ENCODE measurements at regions of chr17 and their contacts with region 1.

Region 1: GRCh38 chr17:20009302-20010098 is at the start of gene SPECC1:
- DNase-seq: peak; percentile 74 to 87
- ATAC-seq: peak; percentile 45 to 99 (median 96)
- H3K4me3 ChIP-seq: peak within 1 kb of the TSS; percentile 75 to 89 (median 79)
- H3K27ac ChIP-seq: peak within 1 kb of the TSS; percentile 77 to 91 (median 86)
- H3K4me1 ChIP-seq: peaks cover 0 to 26% (median 12%) of the 10 kb centered on the region in 9 donors
- H3K27me3 ChIP-seq: peaks cover 0 to 59% (median 5%) of the 10 kb centered on the region in 7 donors
- CTCF ChIP-seq: peak; percentile 38 to 100 (median 98)
- total RNA-seq, gene SPECC1: 6.8 to 15.2 (median 9.7) TPM

Region 2: DNA sequence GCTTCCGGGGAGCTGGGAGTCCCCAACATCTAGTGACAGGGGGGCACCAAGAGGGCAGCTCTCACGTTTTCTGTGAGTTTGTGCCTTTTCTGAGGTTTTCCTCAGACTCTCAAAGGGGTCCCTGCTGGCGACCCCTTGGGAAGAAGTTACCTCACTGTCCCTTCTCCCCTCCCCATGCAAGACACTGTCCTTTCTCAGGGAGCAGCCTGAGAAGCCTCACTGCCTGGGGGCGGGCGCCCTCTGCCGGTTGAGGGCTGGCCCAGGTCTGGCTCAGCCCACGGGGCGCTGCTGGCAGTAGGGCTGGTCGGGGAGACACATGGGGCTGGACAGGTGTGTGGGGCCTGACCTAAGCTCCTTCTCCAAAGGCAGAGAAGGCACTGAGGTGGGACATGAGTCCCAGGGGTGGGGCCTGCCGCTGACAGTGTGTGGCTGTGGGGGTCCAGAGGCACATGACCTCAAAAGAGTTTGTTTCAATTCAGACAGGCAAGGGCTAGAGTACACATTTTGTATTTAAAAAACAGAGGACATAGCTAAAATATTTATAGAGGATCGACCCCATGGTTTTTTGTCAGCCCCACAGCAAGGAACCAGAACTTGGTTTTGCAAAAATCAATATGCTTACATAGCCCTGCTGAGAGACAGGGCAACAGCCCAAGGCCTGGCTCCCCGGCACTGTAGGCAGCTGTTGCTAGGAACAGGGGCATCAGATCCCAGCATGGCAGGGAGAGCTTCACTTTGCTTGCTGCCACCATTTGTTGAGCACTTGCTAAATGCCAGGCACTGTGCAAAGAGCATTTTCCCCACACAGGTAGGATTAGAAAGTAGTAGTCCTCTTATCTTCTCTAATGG is 242.9 kb before region 1 on chr17:
- intact Hi-C with region 1: no loop called
- DNase-seq: peak; percentile 77 to 84
- ATAC-seq: peak; percentile 89 to 95 (median 90)
- H3K4me3 ChIP-seq: no peak overlapping the region
- H3K27ac ChIP-seq: peak overlapping the region in 1 of 10 donors; percentile 3
- H3K4me1 ChIP-seq: peaks cover 0 to 11% (median 0%) of the 10 kb centered on the region in 9 donors
- H3K27me3 ChIP-seq: no peaks in the 10 kb centered on the region
- CTCF ChIP-seq: peak; percentile 80 to 99 (median 98)

Region 3: DNA sequence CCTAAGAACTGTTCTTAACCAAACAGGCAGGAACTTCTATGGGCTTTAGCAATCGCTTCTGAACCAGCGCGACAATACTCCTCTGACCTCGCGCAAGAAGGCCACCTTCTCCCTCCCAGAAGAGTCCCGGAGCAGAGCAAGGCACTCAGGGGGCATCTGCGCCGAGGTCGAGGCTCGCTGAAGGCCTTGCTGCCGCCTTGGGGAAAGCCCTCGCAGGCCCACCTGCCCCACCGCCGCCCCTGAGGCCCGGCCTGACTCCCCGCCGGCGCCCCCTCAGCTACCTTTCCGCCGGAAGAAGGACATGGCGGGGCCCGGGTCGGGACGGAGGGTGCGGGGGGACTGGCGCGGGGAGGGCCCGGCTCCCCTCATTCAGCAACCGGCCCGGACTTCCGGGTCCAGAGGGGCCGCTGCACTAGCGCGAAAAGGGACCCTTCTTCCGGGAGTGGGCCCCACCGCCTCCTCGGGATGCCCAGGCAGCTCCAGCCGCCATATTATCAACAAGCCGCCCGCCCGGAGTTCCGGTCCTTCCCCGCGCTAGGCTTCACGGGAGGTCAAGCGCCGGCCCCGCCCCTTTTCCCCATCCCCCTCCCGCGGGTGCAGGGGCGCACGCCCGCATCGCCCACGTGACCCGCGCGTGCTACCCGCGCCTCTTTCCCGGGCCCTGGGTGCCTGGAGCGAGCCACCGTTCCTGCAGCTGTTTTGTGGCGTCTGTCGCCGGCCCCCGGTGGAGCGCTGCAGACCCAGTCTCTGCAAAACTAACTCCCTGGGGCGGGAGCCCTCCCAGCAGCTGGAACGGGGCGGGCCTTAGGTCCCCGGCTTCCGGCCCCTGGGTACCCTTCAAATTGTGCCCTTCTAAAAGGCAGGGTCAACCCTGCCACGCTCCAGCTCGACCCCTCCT is 31.9 kb before region 1 on chr17 and contains the start of gene AKAP10:
- intact Hi-C with region 1: no loop called
- DNase-seq: peak; percentile 95 to 96
- ATAC-seq: peak; percentile 96 to 98 (median 97)
- H3K4me3 ChIP-seq: peak within 1 kb of the TSS; percentile 69 to 99 (median 88)
- H3K27ac ChIP-seq: peak within 1 kb of the TSS; percentile 74 to 98 (median 94)
- H3K4me1 ChIP-seq: peaks cover 0 to 55% (median 29%) of the 10 kb centered on the region in 9 donors
- H3K27me3 ChIP-seq: no peaks in the 10 kb centered on the region
- CTCF ChIP-seq: no peak
- total RNA-seq, gene AKAP10: 12.2 to 17.0 (median 14.2) TPM

Region 4: GRCh38 chr17:20053361-20053964 is 44.0 kb after region 1 on chr17:
- intact Hi-C with region 1: loop called in 1 of 10 experiments (anchors 5 kb)
- DNase-seq: no peak
- ATAC-seq: peak in 1 of 8 donors; percentile 42
- H3K4me3 ChIP-seq: no peak overlapping the region
- H3K27ac ChIP-seq: no peak overlapping the region
- H3K4me1 ChIP-seq: no peaks in the 10 kb centered on the region
- H3K27me3 ChIP-seq: no peaks in the 10 kb centered on the region
- CTCF ChIP-seq: no peak

Region 5: DNA sequence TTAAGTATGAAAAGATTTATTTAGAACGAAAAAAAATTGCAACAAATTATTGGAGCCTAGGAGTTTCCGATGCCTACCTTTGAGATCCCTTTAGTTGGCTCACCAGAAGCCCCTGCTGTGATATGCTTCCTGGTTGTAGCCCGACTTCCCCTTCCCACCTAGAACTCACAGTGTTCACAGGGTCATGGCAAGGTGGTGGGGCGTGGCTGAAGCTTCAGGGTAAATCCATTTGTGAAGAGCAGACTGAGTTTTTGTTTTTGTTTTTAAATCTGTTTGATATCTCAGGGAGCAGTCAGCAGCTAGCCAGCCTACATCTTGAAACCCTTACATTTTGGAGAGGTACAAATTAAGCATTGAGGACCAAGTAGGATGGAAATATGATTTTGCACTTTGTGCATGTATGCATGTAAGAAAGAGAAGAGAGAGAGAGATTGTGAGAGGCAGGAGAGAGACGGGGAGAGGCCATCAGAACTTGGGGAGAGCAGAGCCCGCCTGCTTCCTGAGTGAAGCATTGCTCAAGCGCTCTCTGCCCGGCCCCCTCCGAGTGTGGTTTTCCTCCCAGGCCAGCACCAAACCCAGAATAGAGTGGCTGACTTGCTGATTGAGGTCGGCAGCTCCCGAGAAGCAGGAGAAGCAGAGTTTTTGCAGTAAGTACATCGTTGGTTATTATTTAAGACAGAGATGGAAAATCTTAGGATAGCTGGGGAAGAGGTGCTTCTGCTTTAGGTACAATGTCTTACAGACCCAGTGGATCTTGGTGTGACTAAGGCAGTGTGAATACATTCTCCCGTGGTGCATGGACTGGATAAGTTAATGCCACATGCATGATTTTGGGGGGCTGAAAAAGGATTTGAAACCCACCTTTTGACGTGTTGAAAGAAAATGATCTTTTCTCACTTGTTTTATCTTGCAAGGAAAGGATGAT is 63.8 kb after region 1 on chr17:
- intact Hi-C with region 1: loop called in 2 of 10 experiments (anchors 5 to 10 kb)
- DNase-seq: peak; percentile 64 to 65
- ATAC-seq: peak; percentile 87 to 94 (median 89)
- H3K4me3 ChIP-seq: peak overlapping the region in 9 of 10 donors; percentile 14 to 51 (median 45)
- H3K27ac ChIP-seq: peak overlapping the region in 9 of 10 donors; percentile 8 to 80 (median 69)
- H3K4me1 ChIP-seq: peaks cover 0 to 76% (median 10%) of the 10 kb centered on the region in 9 donors
- H3K27me3 ChIP-seq: no peaks in the 10 kb centered on the region
- CTCF ChIP-seq: no peak

Region 6: GRCh38 chr17:20095336-20096080 is 86.0 kb after region 1 on chr17:
- intact Hi-C with region 1: loop called in 5 of 10 experiments (anchors 5 to 10 kb)
- DNase-seq: peak; percentile 78 to 82
- ATAC-seq: peak; percentile 58 to 78 (median 71)
- H3K4me3 ChIP-seq: peak overlapping the region in 2 of 10 donors; percentile 3 to 15
- H3K27ac ChIP-seq: peak overlapping the region; percentile 52 to 96 (median 92)
- H3K4me1 ChIP-seq: peaks cover 8 to 66% (median 44%) of the 10 kb centered on the region in 9 donors
- H3K27me3 ChIP-seq: no peaks in the 10 kb centered on the region
- CTCF ChIP-seq: peak in 8 of 9 donors; percentile 19 to 71 (median 54)

Region 7: DNA sequence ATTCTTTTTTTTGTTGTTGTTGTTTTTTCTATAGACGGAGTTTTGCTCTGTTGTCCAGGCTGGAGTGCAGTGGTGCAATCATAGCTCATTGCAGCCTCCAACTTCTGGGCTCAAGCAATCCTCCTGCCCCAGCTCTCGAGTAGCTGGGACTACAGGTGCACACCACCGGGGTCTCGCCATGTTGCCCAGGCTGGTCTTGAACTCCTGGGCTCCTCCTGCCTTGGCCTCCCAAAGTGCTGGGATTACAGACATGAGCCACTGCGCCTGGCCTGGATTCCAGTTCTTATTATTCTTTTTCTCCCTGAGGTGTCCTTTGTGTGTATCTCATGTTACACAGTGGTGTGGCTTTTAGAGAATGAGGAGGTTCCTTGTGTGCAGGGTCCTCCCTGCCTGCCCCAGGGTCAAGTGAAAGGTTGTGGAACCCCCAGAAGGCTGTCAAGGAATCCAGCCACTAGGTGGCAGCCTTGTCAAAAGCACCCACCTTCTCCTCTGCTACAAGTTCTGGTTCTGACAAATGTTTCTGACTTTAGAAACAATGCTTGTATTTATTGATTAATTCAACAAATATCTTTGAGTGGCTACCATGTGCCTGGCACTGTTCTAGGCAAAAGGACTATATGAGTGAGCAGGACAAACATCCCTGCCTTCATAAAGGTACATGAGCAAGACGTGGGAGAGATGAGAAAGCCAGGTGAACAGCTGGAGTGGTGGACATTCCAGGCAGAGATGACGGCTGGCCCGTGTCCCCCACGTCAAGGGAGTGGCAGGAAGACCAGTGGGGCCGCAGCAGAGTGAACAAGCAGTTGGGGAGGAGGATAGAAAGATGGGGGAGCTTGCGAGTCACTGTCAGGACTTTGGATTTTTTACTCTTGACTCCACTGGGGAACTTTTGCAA is 112.1 kb after region 1 on chr17:
- intact Hi-C with region 1: loop called in 5 of 10 experiments (anchors 5 kb)
- DNase-seq: peak; percentile 47 to 61
- ATAC-seq: peak in 7 of 8 donors; percentile 27 to 78 (median 68)
- H3K4me3 ChIP-seq: no peak overlapping the region
- H3K27ac ChIP-seq: peak overlapping the region in 1 of 10 donors; percentile 18
- H3K4me1 ChIP-seq: peaks cover 0 to 24% (median 10%) of the 10 kb centered on the region in 9 donors
- H3K27me3 ChIP-seq: peaks cover 0 to 7% (median 0%) of the 10 kb centered on the region in 7 donors
- CTCF ChIP-seq: peak; percentile 65 to 94 (median 88)

Region 8: DNA sequence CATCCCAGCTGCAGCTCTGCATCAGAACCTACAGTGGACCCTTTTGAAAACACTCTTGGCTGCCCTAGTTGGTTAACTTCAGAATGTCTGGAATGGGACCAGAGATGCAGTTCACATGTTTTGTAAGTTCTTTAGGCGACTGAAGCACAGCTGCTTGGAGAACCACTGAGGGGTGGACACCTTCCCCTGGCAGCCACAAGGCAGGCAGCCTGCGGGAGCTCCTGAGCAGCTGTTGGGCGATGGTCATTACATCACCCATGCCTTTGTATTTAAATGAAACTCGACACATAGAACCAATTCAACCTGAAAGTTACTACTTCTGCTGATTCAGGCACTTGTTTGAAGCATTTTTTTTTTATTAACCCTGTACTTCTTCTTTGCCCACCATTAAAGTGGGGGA is 306.3 kb after region 1 on chr17:
- intact Hi-C with region 1: loop called in 1 of 10 experiments (anchors 10 kb)
- DNase-seq: no peak
- ATAC-seq: no peak
- H3K4me3 ChIP-seq: no peak overlapping the region
- H3K27ac ChIP-seq: no peak overlapping the region
- H3K4me1 ChIP-seq: peaks cover 0 to 6% (median 0%) of the 10 kb centered on the region in 9 donors
- H3K27me3 ChIP-seq: no peaks in the 10 kb centered on the region
- CTCF ChIP-seq: no peak